Activated B cell treated with CpG ODN at 0.5 μM for 24 hours (primary cell): ENCODE measurements at regions of chr5 and their contacts with region 1.

Region 1: DNA sequence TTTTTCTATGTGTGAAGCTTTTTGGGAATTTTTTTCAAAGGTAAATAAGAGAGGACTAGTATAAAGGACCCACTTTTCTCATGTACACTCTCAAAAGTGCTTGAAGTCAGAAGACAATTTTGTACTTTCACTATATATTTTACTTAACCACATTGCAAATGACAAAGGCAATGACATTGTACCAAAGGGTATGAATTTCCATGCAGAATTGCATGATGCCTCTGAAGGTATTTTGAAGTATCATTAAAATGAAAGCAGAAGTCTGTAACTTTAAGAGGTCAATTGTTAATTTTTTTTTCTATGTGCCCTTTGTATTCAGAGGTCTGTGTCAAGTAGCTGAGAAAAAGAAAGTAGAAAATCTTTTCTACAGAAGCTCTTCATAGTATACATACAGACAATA is 84.7 kb downstream of the ST8SIA4 start:
- DNase-seq: no peak
- ATAC-seq: no peak
- H3K4me3 Mint-ChIP-seq: no peak overlapping the region
- H3K27ac Mint-ChIP-seq: no peak overlapping the region
- H3K4me1 Mint-ChIP-seq: peaks cover 47% of the 10 kb centered on the region
- H3K27me3 Mint-ChIP-seq: no peaks in the 10 kb centered on the region
- CTCF ChIP-seq: no peak

Region 2: GRCh38 chr5:100535060-100536005 is 283.0 kb before region 1 on chr5 and contains the start of gene FAM174A:
- CTCF ChIA-PET with region 1: no interaction called
- POLR2A ChIA-PET with region 1: no interaction called
- intact Hi-C with region 1: no loop called
- DNase-seq: peak; percentile 87
- ATAC-seq: peak; percentile 91
- H3K4me3 Mint-ChIP-seq: peak within 1 kb of the TSS; percentile 99
- H3K27ac Mint-ChIP-seq: peak within 1 kb of the TSS; percentile 91
- H3K4me1 Mint-ChIP-seq: peaks cover 21% of the 10 kb centered on the region
- H3K27me3 Mint-ChIP-seq: peaks cover 2% of the 10 kb centered on the region
- CTCF ChIP-seq: no peak
- total RNA-seq, gene FAM174A: 4.1 and 5.2 TPM in 2 replicates

Region 3: DNA sequence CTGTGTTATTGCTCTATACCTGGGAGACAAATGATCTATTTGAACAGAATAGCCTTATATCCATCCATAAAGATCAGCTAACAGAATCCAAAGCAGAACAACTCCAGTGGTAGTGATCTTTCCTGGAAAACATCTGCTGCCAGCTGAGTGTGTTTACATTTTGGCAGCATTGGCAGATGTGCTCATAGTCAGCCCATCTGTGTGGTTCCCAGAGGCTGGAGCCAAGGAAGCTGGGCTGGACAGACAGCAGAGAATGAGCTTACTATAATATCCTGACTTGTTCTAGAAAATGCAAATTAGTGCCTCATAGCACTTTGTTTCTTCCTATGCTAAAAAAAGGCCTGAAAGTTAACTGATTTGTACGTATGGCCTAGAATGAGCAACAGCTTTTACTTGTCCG is 14.9 kb before region 1 on chr5:
- CTCF ChIA-PET with region 1: no interaction called
- POLR2A ChIA-PET with region 1: no interaction called
- intact Hi-C with region 1: loop called (anchors 2 kb)
- DNase-seq: no peak
- ATAC-seq: no peak
- H3K4me3 Mint-ChIP-seq: no peak overlapping the region
- H3K27ac Mint-ChIP-seq: no peak overlapping the region
- H3K4me1 Mint-ChIP-seq: peaks cover 29% of the 10 kb centered on the region
- H3K27me3 Mint-ChIP-seq: no peaks in the 10 kb centered on the region
- CTCF ChIP-seq: no peak